GM12878 (cell line): ENCODE measurements at regions of chrX and their contacts with region 1.

Region 1: GRCh38 chrX:55907968-55908607 is 190.5 kb downstream of the RRAGB start:
- DNase-seq: no peak
- ATAC-seq: peak; percentile 78
- H3K4me3 ChIP-seq: peak overlapping the region; percentile 76
- H3K27ac ChIP-seq: peak overlapping the region; percentile 87
- H3K4me1 ChIP-seq: no peaks in the 10 kb centered on the region; the same call in 1 of the 2 replicates
- H3K27me3 ChIP-seq: no peaks in the 10 kb centered on the region
- CTCF ChIP-seq: peak; percentile 52 to 60 (median 58)
- EP300 ChIP-seq: no peak
- POLR2A ChIP-seq: no peak
- RAD21 ChIP-seq: peak; percentile 58

Region 2: GRCh38 chrX:55648434-55648833 is 259.7 kb before region 1 on chrX:
- CTCF ChIA-PET with region 1: no interaction called
- POLR2A ChIA-PET with region 1: no interaction called
- RAD21 ChIA-PET with region 1: no interaction called
- SMC1A ChIA-PET with region 1: no interaction called
- in situ Hi-C with region 1: loop called (anchors 5 kb)
- intact Hi-C with region 1: loop called (anchors 10 kb)
- DNase-seq: no peak
- ATAC-seq: peak; percentile 53
- H3K4me3 ChIP-seq: no peak overlapping the region
- H3K27ac ChIP-seq: no peak overlapping the region
- H3K4me1 ChIP-seq: no peaks in the 10 kb centered on the region
- H3K27me3 ChIP-seq: no peaks in the 10 kb centered on the region
- CTCF ChIP-seq: no peak
- EP300 ChIP-seq: no peak
- POLR2A ChIP-seq: no peak
- RAD21 ChIP-seq: no peak

Region 3: GRCh38 chrX:55801805-55802204 is 106.3 kb before region 1 on chrX:
- CTCF ChIA-PET with region 1: interaction called, 4 read pairs
- POLR2A ChIA-PET with region 1: no interaction called
- RAD21 ChIA-PET with region 1: interaction called, 8 read pairs
- SMC1A ChIA-PET with region 1: interaction called, 24 read pairs
- in situ Hi-C with region 1: no loop called
- intact Hi-C with region 1: loop called (anchors 2 kb)
- DNase-seq: no peak
- ATAC-seq: peak; percentile 36; the same call in 1 of the 3 replicates
- H3K4me3 ChIP-seq: no peak overlapping the region
- H3K27ac ChIP-seq: no peak overlapping the region
- H3K4me1 ChIP-seq: no peaks in the 10 kb centered on the region
- H3K27me3 ChIP-seq: no peaks in the 10 kb centered on the region
- CTCF ChIP-seq: peak in 1 of 3 experiments; percentile 32; a peak in 1 of 6 replicates
- EP300 ChIP-seq: no peak
- POLR2A ChIP-seq: no peak
- RAD21 ChIP-seq: peak; percentile 32; the same call in 1 of the 2 replicates

Region 4: GRCh38 chrX:55867181-55867651 is 40.9 kb before region 1 on chrX:
- CTCF ChIA-PET with region 1: interaction called, 7 read pairs
- POLR2A ChIA-PET with region 1: interaction called, 8 read pairs
- RAD21 ChIA-PET with region 1: interaction called, 10 read pairs
- SMC1A ChIA-PET with region 1: interaction called, 10 read pairs
- in situ Hi-C with region 1: no loop called
- intact Hi-C with region 1: loop called (anchors 1 kb)
- DNase-seq: peak; percentile 86
- ATAC-seq: peak; percentile 93
- H3K4me3 ChIP-seq: no peak overlapping the region
- H3K27ac ChIP-seq: peak overlapping the region; percentile 57
- H3K4me1 ChIP-seq: peaks cover 8% of the 10 kb centered on the region
- H3K27me3 ChIP-seq: no peaks in the 10 kb centered on the region
- CTCF ChIP-seq: no peak
- EP300 ChIP-seq: no peak; a peak in 1 of 4 replicates
- POLR2A ChIP-seq: no peak
- RAD21 ChIP-seq: peak; percentile 32; the same call in 1 of the 2 replicates